ENCODE measurements at regions of chr15 and their contacts with region 1.

Region 1: DNA sequence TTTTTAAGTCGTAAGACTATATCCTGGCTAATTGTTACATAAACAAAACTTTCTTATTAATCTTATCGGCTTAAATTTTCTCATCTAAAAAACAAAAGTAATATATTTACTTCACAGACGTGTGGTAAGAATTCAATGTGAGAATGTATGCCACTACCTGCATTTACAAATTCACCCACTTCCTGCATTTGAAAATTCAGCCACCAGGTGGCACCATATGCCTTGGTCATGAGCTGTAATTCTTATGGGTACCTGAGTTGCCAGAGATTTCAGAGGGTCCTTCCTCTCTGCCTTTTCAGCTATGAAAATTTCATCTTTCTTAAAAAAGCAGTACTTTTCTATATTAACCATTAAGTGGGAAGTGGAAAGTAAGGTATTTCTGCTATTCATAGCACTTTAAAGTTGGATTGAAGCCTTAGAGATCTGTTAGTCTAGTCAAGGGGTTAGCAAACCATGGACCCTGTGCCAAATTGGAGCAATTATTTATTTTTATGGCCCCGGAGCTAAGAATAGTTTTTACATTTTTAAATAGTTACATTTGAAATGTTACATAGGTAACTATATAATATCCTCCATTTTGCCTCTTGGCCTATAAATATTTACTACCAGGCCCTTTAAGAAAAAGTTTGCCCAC is 127.8 kb downstream of the HCN4 start:
- DNase-seq: peak; percentile 23
- ATAC-seq: no peak
- H3K4me3 Mint-ChIP-seq: no peak overlapping the region
- H3K27ac Mint-ChIP-seq: no peak overlapping the region
- H3K4me1 Mint-ChIP-seq: no peaks in the 10 kb centered on the region
- H3K27me3 Mint-ChIP-seq: peaks cover 9% of the 10 kb centered on the region
- CTCF ChIP-seq: peak; percentile 98

Region 2: DNA sequence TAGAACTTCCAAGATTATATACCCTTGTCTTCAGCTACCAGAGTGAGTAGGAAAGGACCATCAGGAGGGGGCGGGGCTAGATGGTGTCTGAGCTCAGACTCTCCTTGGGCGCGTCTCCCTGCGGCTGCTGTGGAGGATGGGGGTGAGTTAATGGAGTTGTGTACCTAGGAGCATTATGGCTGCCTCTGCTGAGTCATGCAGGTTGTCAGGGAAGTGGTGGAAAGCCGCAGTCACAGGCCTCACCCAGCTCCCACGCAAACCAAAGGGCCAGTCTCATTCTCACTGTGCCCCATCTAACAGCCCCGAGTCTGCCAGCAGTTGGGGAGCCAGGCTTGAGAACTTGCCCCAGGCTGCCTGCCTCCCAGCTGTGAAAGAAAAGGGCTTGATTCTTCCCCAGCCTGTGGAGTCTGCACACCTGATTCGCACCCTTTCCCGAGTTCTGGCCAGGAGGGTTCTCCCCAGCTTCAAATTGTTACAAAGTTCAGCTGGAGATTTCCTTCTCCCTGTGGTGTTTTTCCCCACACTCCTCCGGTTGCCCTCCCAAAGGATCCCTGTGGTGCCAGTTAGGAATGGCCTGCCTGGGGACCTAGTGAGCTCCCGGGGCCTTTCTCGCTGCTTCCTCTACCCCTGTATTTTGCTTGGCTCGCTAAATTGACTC is 15.5 kb before region 1 on chr15:
- CTCF ChIA-PET with region 1: no interaction called
- POLR2A ChIA-PET with region 1: no interaction called
- intact Hi-C with region 1: no loop called
- DNase-seq: no peak
- ATAC-seq: no peak
- H3K4me3 Mint-ChIP-seq: no peak overlapping the region
- H3K27ac Mint-ChIP-seq: no peak overlapping the region
- H3K4me1 Mint-ChIP-seq: no peaks in the 10 kb centered on the region
- H3K27me3 Mint-ChIP-seq: peaks cover 7% of the 10 kb centered on the region
- CTCF ChIP-seq: no peak

Region 3: GRCh38 chr15:73265536-73266153 is 24.7 kb after region 1 on chr15:
- CTCF ChIA-PET with region 1: interaction called, 27 read pairs
- POLR2A ChIA-PET with region 1: no interaction called
- intact Hi-C with region 1: no loop called
- DNase-seq: peak; percentile 16
- ATAC-seq: peak; percentile 65
- H3K4me3 Mint-ChIP-seq: no peak overlapping the region
- H3K27ac Mint-ChIP-seq: no peak overlapping the region
- H3K4me1 Mint-ChIP-seq: no peaks in the 10 kb centered on the region
- H3K27me3 Mint-ChIP-seq: peaks cover 1% of the 10 kb centered on the region
- CTCF ChIP-seq: peak; percentile 47

Region 4: GRCh38 chr15:73273181-73274002 is 32.4 kb after region 1 on chr15:
- CTCF ChIA-PET with region 1: interaction called, 19 read pairs
- POLR2A ChIA-PET with region 1: no interaction called
- intact Hi-C with region 1: loop called (anchors 1 kb)
- DNase-seq: no peak
- ATAC-seq: peak; percentile 60
- H3K4me3 Mint-ChIP-seq: no peak overlapping the region
- H3K27ac Mint-ChIP-seq: no peak overlapping the region
- H3K4me1 Mint-ChIP-seq: peaks cover 4% of the 10 kb centered on the region
- H3K27me3 Mint-ChIP-seq: no peaks in the 10 kb centered on the region
- CTCF ChIP-seq: peak; percentile 19

Region 5: GRCh38 chr15:73560501-73561117 is 319.6 kb after region 1 on chr15:
- CTCF ChIA-PET with region 1: no interaction called
- POLR2A ChIA-PET with region 1: no interaction called
- intact Hi-C with region 1: loop called (anchors 5 kb)
- DNase-seq: no peak
- ATAC-seq: peak; percentile 40
- H3K4me3 Mint-ChIP-seq: no peak overlapping the region
- H3K27ac Mint-ChIP-seq: no peak overlapping the region
- H3K4me1 Mint-ChIP-seq: no peaks in the 10 kb centered on the region
- H3K27me3 Mint-ChIP-seq: no peaks in the 10 kb centered on the region
- CTCF ChIP-seq: no peak

Region 6: GRCh38 chr15:73908030-73908821 is 667.2 kb after region 1 on chr15:
- CTCF ChIA-PET with region 1: interaction called, 3 read pairs
- POLR2A ChIA-PET with region 1: no interaction called
- intact Hi-C with region 1: loop called (anchors 2 kb)
- DNase-seq: peak; percentile 55
- ATAC-seq: peak; percentile 82
- H3K4me3 Mint-ChIP-seq: no peak overlapping the region
- H3K27ac Mint-ChIP-seq: no peak overlapping the region
- H3K4me1 Mint-ChIP-seq: no peaks in the 10 kb centered on the region
- H3K27me3 Mint-ChIP-seq: peaks cover 11% of the 10 kb centered on the region
- CTCF ChIP-seq: peak; percentile 55

Measured in activated B cell treated with CpG ODN at 0.5 μM for 24 hours (primary cell).